WTC11 (cell line): ENCODE measurements at regions of chr22 and their contacts with region 1.

Region 1: DNA sequence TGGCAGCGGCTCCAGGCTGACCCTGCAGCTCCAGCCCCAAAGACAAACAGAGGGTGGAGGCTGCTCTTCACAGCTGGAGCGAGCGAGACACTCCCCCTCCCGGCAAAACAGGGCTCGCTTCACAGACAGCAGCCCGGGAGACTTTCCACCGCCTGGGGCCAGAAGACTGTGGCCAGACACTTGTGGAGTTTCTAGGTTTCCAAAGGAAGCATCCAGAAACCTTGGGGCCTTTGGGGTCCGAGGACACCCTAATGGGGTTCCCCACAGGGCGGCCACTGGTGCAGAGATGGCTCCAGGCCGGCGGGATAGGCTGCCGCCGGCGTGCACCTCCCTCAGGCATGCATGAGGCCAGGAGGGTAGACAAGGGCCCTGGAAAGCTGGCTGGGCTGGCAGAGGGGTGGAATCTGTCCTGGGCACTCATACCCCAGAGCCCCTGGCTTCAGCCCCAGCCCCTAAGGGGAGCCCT is at the start of gene IL17REL:
- DNase-seq: no peak
- ATAC-seq: no peak
- H3K4me3 Mint-ChIP-seq: peak within 1 kb of the TSS; percentile 65
- H3K27ac Mint-ChIP-seq: no peak within 1 kb of the TSS
- H3K4me1 Mint-ChIP-seq: peaks cover 16% of the 10 kb centered on the region
- H3K27me3 Mint-ChIP-seq: peaks cover 55% of the 10 kb centered on the region
- CTCF ChIP-seq: no peak
- total RNA-seq, gene IL17REL: 0.23 to 0.34 TPM (median 0.24 TPM) in 3 replicates

Region 2: DNA sequence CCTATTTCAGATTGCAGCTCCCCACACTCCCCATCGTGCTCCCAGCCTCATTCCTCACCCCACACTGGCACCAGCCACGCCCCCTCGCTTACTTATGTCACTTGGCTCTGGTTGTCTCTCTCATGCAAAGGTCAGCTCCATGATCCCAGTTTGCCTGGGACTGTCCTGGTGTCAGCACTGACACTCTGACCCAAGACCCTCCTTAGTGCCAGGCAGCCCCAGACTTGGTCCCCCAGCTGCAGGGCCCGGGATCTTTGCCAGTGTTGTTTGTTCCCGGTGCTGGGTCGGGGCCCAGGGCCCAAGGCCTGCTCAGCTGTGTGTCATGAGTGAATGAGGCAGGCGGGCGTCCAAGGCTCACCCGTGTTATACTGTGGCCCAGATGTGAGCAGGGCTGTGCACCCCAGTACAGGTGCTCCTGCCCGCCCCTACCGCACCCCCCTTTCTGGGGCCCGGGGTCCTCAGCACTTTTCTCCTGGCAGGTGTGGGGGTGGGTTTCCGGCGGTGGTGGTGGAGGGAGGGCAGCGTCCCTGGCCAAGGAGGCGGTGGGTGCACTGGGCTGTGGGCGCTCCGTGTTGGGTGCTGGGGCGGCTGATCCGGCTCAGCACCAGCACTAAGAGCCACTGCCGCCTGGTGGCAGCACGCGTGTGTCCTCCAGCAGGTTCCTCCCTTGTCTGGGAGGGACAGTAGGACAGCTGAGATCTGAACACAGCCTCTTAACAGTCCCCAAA is 19.7 kb before region 1 on chr22:
- CTCF ChIA-PET with region 1: interaction called, 15 read pairs
- POLR2A ChIA-PET with region 1: no interaction called
- DNase-seq: peak; percentile 72
- ATAC-seq: peak; percentile 90
- H3K4me3 Mint-ChIP-seq: no peak overlapping the region
- H3K27ac Mint-ChIP-seq: no peak overlapping the region
- H3K4me1 Mint-ChIP-seq: no peaks in the 10 kb centered on the region
- H3K27me3 Mint-ChIP-seq: peaks cover 28% of the 10 kb centered on the region
- CTCF ChIP-seq: peak; percentile 55